ENCODE measurements at regions of chr1 and their contacts with region 1.

Region 1: DNA sequence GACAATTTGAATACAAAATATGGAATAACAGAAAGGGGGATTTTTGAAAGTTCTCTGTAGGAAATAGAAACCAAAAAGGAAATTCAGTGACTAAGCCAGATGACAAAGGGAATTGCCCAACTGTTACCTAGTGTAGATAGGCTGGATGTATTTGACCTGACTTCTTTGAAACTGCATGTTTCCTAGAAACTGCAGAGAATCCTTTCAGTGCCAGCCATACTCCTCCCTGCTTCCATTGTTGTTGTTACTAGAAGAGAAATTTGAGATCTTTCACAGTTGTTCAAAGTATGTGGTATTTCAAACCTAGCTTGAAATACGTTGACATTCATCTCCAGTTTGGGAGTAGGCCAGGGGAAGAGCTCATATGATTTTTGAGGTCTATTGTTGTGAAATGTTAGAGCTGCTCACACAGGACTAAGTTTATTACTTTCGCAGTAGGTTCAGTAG is 1.8 kb upstream of the GBP5 start:
- DNase-seq: no peak
- H3K4me3 Mint-ChIP-seq: peak overlapping the region; percentile 71
- H3K27ac Mint-ChIP-seq: peak overlapping the region; percentile 93
- H3K4me1 Mint-ChIP-seq: peaks cover 71% of the 10 kb centered on the region
- H3K27me3 Mint-ChIP-seq: no peaks in the 10 kb centered on the region

Region 2: GRCh38 chr1:88946861-88947260 is 327.6 kb before region 1 on chr1:
- intact Hi-C with region 1: no loop called
- DNase-seq: no peak
- H3K4me3 Mint-ChIP-seq: no peak overlapping the region
- H3K27ac Mint-ChIP-seq: peak overlapping the region; percentile 63
- H3K4me1 Mint-ChIP-seq: peaks cover 4% of the 10 kb centered on the region
- H3K27me3 Mint-ChIP-seq: no peaks in the 10 kb centered on the region

Region 3: GRCh38 chr1:89085781-89086180 is 188.7 kb before region 1 on chr1:
- intact Hi-C with region 1: loop called (anchors 5 kb)
- DNase-seq: peak; percentile 51
- H3K4me3 Mint-ChIP-seq: no peak overlapping the region
- H3K27ac Mint-ChIP-seq: no peak overlapping the region
- H3K4me1 Mint-ChIP-seq: peaks cover 14% of the 10 kb centered on the region
- H3K27me3 Mint-ChIP-seq: peaks cover 8% of the 10 kb centered on the region

Region 4: GRCh38 chr1:89198491-89199072 is 75.9 kb before region 1 on chr1 and contains the start of gene GBP4:
- intact Hi-C with region 1: loop called (anchors 2 kb)
- DNase-seq: peak; percentile 30
- H3K4me3 Mint-ChIP-seq: peak within 1 kb of the TSS; percentile 86
- H3K27ac Mint-ChIP-seq: peak within 1 kb of the TSS; percentile 93
- H3K4me1 Mint-ChIP-seq: peaks cover 79% of the 10 kb centered on the region
- H3K27me3 Mint-ChIP-seq: no peaks in the 10 kb centered on the region
- total RNA-seq, gene GBP4: 13.9 and 14.3 TPM in 2 replicates

Region 5: DNA sequence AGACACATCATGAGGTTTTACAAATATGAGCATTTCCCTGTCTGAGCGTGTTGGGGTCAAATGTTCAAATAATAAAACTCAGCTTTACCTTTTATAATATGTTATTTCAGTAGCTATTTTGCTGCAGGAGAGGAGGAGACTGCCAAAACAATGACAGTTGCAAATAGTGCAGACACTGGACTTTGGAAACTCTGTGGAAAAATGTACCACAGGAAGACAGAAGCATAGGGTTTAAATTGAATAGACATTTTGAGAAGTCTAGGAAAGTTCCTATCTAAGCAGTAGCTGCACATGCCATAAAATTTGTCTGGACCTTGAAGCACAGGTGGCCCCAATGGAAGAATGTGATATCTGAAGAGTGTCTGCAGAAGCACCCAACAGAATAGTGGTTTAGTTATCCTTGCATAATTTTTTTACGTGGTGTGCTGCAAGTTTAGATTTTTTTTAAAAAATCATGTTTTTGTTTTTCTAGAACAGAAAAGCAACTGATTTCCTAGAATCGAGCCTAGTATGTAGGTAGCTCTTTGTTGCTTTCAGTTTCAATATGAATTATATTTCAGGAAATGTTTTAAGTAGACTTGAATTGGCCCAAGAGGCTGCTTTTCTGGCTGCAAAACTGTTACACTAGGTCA is 12.2 kb after region 1 on chr1:
- intact Hi-C with region 1: loop called (anchors 1 kb)
- DNase-seq: no peak
- H3K4me3 Mint-ChIP-seq: peak overlapping the region; percentile 7
- H3K27ac Mint-ChIP-seq: peak overlapping the region; percentile 65
- H3K4me1 Mint-ChIP-seq: peaks cover 64% of the 10 kb centered on the region
- H3K27me3 Mint-ChIP-seq: no peaks in the 10 kb centered on the region

Region 6: DNA sequence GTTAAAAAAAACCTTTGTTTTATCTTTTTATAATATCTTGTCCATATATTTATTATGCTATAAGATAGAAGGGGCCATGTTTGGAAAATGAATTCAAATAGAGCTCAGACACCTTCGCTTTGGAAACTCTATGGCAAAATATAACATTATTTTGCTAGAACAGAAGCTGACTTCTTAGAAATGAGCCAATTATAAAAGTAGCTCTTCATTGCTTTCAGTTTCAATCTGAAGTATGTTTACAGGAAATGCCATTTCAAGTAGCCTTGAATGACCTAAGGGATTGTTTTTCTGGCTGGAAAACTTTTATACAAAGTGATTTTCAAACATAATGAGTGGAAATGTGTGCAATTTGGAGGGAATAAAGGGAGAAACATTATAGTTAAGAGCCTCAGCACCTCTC is 36.1 kb after region 1 on chr1:
- intact Hi-C with region 1: loop called (anchors 5 kb)
- DNase-seq: no peak
- H3K4me3 Mint-ChIP-seq: no peak overlapping the region
- H3K27ac Mint-ChIP-seq: peak overlapping the region; percentile 79
- H3K4me1 Mint-ChIP-seq: peaks cover 41% of the 10 kb centered on the region
- H3K27me3 Mint-ChIP-seq: no peaks in the 10 kb centered on the region

Region 7: DNA sequence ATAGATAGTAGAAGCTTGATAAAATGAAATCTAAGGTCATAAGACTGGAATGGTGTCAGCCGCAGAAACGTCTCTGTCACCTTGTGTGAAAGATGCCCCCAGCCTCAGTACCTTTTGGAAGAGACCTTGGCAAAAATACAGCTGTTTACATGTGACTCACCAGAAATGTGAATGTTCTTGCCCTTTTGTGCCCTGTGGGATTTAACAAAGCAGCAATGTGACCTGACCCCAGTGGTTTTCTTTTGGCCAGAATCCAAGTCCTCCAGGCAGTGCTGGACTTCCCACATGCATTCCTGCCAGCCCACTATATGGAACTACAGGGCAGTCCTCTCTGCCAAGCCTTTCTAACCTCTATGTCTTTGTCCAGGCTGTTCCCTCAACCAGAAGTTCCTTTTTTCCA is 331.3 kb after region 1 on chr1:
- intact Hi-C with region 1: loop called (anchors 10 kb)
- DNase-seq: no peak
- H3K4me3 Mint-ChIP-seq: peak overlapping the region; percentile 5
- H3K27ac Mint-ChIP-seq: peak overlapping the region; percentile 99
- H3K4me1 Mint-ChIP-seq: peaks cover 90% of the 10 kb centered on the region
- H3K27me3 Mint-ChIP-seq: no peaks in the 10 kb centered on the region